ENCODE measurements at regions of chr16 and their contacts with region 1.

Region 1: DNA sequence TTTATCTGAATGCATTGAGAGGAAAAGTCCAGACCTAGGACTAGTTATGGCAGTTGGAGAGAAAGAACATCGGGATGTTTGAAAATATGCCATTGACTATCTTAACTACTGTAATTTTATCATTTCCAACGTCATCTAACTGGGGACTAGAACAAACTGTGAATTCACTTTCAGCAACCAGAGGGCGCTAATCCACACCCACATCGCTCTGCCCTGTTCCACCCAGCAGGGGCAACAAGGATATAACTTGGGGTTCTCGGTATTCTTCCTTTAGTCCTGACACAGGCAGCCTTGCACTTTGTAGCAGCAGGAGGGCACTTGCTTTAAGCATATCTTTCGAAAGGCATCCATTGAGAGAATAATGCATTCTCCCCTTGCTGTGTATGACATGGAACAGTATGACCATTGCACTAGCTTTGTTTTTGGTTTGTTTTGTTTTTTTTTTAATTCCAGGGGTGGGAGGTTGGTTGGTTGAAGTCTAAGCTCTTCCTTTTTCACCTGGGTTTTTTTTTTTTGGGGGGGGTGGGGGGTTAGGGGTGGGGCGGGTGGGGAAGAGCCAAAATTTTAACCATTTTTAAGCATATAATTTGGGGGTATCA is 31.5 kb downstream of the SIAH1 start:
- DNase-seq: peak in 1 of 2 donors; percentile 61
- ATAC-seq: peak; percentile 73 to 87 (median 85)
- H3K4me3 ChIP-seq: no peak overlapping the region
- H3K27ac ChIP-seq: no peak overlapping the region
- H3K4me1 ChIP-seq: peaks cover 0 to 30% (median 9%) of the 10 kb centered on the region in 9 donors
- H3K27me3 ChIP-seq: no peaks in the 10 kb centered on the region
- CTCF ChIP-seq: peak; percentile 72 to 91 (median 87)

Region 2: GRCh38 chr16:48318630-48319029 is 35.0 kb before region 1 on chr16:
- intact Hi-C with region 1: loop called in 1 of 10 experiments (anchors 1 kb)
- DNase-seq: peak in 1 of 2 donors; percentile 74
- ATAC-seq: peak; percentile 69 to 93 (median 90)
- H3K4me3 ChIP-seq: peak overlapping the region in 1 of 10 donors; percentile 2
- H3K27ac ChIP-seq: peak overlapping the region in 8 of 10 donors; percentile 56 to 84 (median 72)
- H3K4me1 ChIP-seq: peaks cover 3 to 55% (median 33%) of the 10 kb centered on the region in 9 donors
- H3K27me3 ChIP-seq: no peaks in the 10 kb centered on the region
- CTCF ChIP-seq: no peak

Region 3: DNA sequence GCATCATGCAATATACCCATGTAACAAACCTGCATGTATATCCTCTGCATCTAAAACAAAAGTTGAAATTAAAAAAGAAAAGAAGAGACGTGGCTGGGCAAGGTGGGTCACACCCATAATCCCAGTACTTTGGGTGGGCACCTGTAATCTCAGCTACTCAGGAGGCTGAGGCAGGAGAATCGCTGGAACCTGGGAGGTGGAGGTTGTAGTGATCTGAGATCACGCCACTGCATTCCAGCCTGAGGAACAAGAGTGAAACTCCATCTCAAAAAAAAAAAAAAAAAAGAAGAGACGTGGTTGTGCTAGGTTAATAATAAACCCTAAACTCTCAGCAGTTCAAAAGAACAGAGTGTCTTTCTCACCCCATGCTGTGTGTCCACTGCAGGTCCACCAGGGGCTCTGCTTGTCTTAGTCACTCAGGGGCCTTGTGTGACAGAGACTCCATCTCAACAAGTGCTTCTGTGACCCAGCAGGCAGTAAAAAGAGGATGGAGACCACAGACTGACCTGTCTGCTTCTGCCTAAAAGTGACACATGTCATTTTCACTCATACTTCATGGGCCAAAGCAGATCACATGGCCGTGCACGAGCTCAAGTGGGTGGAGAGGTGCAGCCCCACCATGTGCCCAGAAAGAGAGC is 278.6 kb after region 1 on chr16:
- intact Hi-C with region 1: loop called in 4 of 10 experiments (anchors 2 to 10 kb)
- DNase-seq: no peak
- ATAC-seq: no peak
- H3K4me3 ChIP-seq: no peak overlapping the region
- H3K27ac ChIP-seq: no peak overlapping the region
- H3K4me1 ChIP-seq: peaks cover 0 to 11% (median 3%) of the 10 kb centered on the region in 9 donors
- H3K27me3 ChIP-seq: no peaks in the 10 kb centered on the region
- CTCF ChIP-seq: no peak